ENCODE measurements at regions of chr4 and their contacts with region 1.

Region 1: GRCh38 chr4:108683479-108683878 is 33.1 kb downstream of the OSTC start:
- DNase-seq: peak; percentile 46 to 70 (median 64)
- H3K4me3 ChIP-seq: no peak overlapping the region
- H3K27ac ChIP-seq: no peak overlapping the region
- H3K4me1 ChIP-seq: no peaks in the 10 kb centered on the region
- H3K27me3 ChIP-seq: peaks cover 0 to 20% (median 4%) of the 10 kb centered on the region in 5 experiments

Region 2: DNA sequence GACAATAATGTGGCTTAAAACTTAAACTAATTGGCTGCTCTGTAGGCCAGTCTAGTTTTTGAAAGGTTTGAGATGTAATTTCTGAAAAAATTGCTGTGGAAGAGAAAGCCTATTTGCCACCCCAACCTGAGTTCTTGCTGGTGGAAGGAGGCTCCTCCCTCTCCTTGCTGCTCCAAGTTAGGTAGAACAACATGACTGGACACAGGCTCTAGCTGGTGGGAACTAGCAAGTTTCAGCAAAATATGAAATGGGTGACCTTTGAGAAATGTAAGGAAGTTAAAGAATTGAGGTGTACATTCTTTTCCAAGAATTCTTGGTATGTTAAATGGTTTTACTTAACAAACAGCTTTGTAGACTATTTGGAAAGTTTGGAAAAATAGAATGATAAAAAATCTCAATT is 55.1 kb before region 1 on chr4:
- CTCF ChIA-PET with region 1: no interaction called
- POLR2A ChIA-PET with region 1: no interaction called
- DNase-seq: no peak
- H3K4me3 ChIP-seq: no peak overlapping the region
- H3K27ac ChIP-seq: no peak overlapping the region
- H3K4me1 ChIP-seq: peaks cover 0 to 5% (median under 1%) of the 10 kb centered on the region in 4 experiments
- H3K27me3 ChIP-seq: no peaks in the 10 kb centered on the region

Region 3: GRCh38 chr4:108696160-108696559 is 12.7 kb after region 1 on chr4:
- CTCF ChIA-PET with region 1: interaction called, 10 read pairs
- POLR2A ChIA-PET with region 1: no interaction called
- DNase-seq: no peak
- H3K4me3 ChIP-seq: no peak overlapping the region
- H3K27ac ChIP-seq: no peak overlapping the region
- H3K4me1 ChIP-seq: peaks cover 4 to 13% (median 9%) of the 10 kb centered on the region in 4 experiments
- H3K27me3 ChIP-seq: peaks cover 0 to 69% (median 22%) of the 10 kb centered on the region in 5 experiments